Heart left ventricle (tissue), 16 donors: ENCODE measurements at regions of chr12 and their contacts with region 1.

Region 1: GRCh38 chr12:18982226-18982949 is 147.1 kb upstream of the PLEKHA5 start:
- DNase-seq: no peak
- ATAC-seq: no peak
- H3K4me3 ChIP-seq: no peak overlapping the region
- H3K27ac ChIP-seq: no peak overlapping the region
- H3K4me1 ChIP-seq: no peaks in the 10 kb centered on the region
- H3K27me3 ChIP-seq: no peaks in the 10 kb centered on the region
- CTCF ChIP-seq: no peak
- POLR2A ChIP-seq: no peak

Region 2: DNA sequence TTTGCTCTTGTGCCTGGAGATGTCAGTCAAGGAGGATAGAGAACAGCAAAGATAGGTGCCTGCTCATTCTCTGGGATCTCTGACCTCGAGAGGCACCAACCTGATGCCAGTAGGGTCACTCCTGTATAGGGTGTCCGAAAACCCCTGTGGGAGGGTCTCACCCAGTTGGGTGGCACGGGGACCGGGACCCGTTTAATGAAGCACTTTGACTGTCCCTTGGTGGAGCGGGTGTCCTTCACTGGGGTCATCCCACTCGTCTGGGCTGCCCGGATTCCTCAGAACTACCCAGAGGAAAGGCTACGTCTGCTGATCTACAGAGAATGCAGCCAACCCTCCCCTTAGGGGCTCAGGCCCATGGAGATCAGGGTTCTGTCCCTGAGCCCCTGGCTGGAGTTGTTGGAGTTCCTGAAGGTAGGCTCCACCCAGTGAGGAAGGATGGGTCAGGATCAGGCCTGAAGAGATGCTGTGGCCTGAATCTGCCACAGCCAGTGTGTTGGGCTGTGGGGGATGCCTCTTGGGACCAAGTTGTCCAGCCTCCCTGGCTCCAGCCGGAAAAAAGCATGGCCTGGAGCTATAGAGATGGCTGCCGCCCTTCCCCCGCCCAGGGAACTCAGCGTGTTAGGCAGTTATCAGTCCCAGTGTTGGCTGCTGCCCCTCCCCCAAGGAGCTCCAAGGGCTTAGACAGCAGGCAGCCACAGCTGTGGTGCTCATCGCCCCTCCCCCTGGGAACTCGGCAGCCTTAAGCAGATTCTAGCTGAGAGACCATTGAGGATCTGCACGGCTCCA is 86.7 kb before region 1 on chr12:
- intact Hi-C with region 1: loop called in 1 of 10 experiments (anchors 5 kb)
- DNase-seq: peak; percentile 63 to 89 (median 73)
- ATAC-seq: peak in 2 of 4 donors; percentile 36 to 56
- H3K4me3 ChIP-seq: no peak overlapping the region
- H3K27ac ChIP-seq: no peak overlapping the region
- H3K4me1 ChIP-seq: peaks cover 0 to 5% (median 0%) of the 10 kb centered on the region in 12 donors
- H3K27me3 ChIP-seq: no peaks in the 10 kb centered on the region
- CTCF ChIP-seq: no peak
- POLR2A ChIP-seq: no peak

Region 3: DNA sequence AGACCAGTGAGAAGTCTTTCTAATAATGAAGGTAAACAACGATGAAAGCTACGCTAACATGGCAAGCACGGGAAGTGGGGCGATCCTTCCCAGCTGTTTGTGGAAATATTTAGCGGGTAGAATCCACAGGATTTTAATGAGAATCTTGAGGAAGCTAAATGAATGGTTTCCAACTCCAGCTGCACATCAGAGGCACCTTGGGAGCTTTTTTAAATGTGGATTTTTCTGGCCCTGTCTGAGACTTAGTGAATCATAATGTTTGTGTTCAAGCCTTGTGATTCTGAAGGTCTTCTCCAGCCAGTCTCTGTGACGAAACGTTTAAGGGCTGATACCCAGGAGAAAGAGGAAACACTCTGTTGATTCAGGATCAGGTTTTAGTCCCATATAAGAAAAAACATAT is 74.7 kb before region 1 on chr12:
- intact Hi-C with region 1: no loop called
- DNase-seq: peak in 1 of 5 donors; percentile 13
- ATAC-seq: peak; percentile 76 to 91 (median 80)
- H3K4me3 ChIP-seq: no peak overlapping the region
- H3K27ac ChIP-seq: peak overlapping the region in 10 of 12 donors; percentile 3 to 78 (median 46)
- H3K4me1 ChIP-seq: peaks cover 0 to 13% (median 0%) of the 10 kb centered on the region in 12 donors
- H3K27me3 ChIP-seq: no peaks in the 10 kb centered on the region
- CTCF ChIP-seq: no peak
- POLR2A ChIP-seq: no peak